ENCODE measurements at regions of chr19 and their contacts with region 1.

Region 1: GRCh38 chr19:11346092-11346940 is at the starts of genes CCDC159 and TMEM205:
- DNase-seq: peak; percentile 97 to 98
- ATAC-seq: peak; percentile 92 to 98 (median 93)
- H3K4me3 ChIP-seq: peak within 1 kb of the TSS; percentile 96
- H3K4me3 Mint-ChIP-seq: peak within 1 kb of the TSS; percentile 99
- H3K27ac ChIP-seq: peak within 1 kb of the TSS; percentile 91
- H3K27ac Mint-ChIP-seq: peak within 1 kb of the TSS; percentile 98
- H3K4me1 ChIP-seq: peaks cover 21% of the 10 kb centered on the region
- H3K4me1 Mint-ChIP-seq: peaks cover 18 to 32% of the 10 kb centered on the region in 2 donors
- H3K27me3 ChIP-seq: no peaks in the 10 kb centered on the region
- H3K27me3 Mint-ChIP-seq: no peaks in the 10 kb centered on the region
- CTCF ChIP-seq: no peak
- total RNA-seq, gene CCDC159: 86.9 to 94.9 (median 91.8) TPM
- total RNA-seq, gene TMEM205: 25.0 to 29.9 (median 29.5) TPM

Region 2: GRCh38 chr19:11435058-11435832 is 88.9 kb after region 1 on chr19 and contains the starts of genes ODAD3 and PRKCSH:
- intact Hi-C with region 1: loop called (anchors 1 kb)
- DNase-seq: peak; percentile 94 to 99
- ATAC-seq: peak; percentile 93 to 98 (median 93)
- H3K4me3 ChIP-seq: peak within 1 kb of the TSS; percentile 84
- H3K4me3 Mint-ChIP-seq: peak within 1 kb of the TSS; percentile 99
- H3K27ac ChIP-seq: peak within 1 kb of the TSS; percentile 75
- H3K27ac Mint-ChIP-seq: peak within 1 kb of the TSS; percentile 97 to 99
- H3K4me1 ChIP-seq: peaks cover 26% of the 10 kb centered on the region
- H3K4me1 Mint-ChIP-seq: peaks cover 21 to 29% of the 10 kb centered on the region in 2 donors
- H3K27me3 ChIP-seq: no peaks in the 10 kb centered on the region
- H3K27me3 Mint-ChIP-seq: no peaks in the 10 kb centered on the region
- CTCF ChIP-seq: peak; percentile 84
- total RNA-seq, gene ODAD3: not detected
- total RNA-seq, gene PRKCSH: 320 to 367 (median 327) TPM

Region 3: GRCh38 chr19:11505032-11505503 is 158.8 kb after region 1 on chr19:
- intact Hi-C with region 1: loop called (anchors 1 kb)
- DNase-seq: peak; percentile 94 to 97
- ATAC-seq: peak; percentile 92 to 97 (median 92)
- H3K4me3 ChIP-seq: peak overlapping the region; percentile 40
- H3K4me3 Mint-ChIP-seq: peak overlapping the region; percentile 89
- H3K27ac ChIP-seq: peak overlapping the region; percentile 78
- H3K27ac Mint-ChIP-seq: peak overlapping the region; percentile 88 to 92
- H3K4me1 ChIP-seq: peaks cover 16% of the 10 kb centered on the region
- H3K4me1 Mint-ChIP-seq: peaks cover 15 to 16% of the 10 kb centered on the region in 2 donors
- H3K27me3 ChIP-seq: no peaks in the 10 kb centered on the region
- H3K27me3 Mint-ChIP-seq: no peaks in the 10 kb centered on the region
- CTCF ChIP-seq: no peak